Naive thymus-derived CD8-positive, alpha-beta T cell (primary cell): ENCODE measurements at regions of chr6 and their contacts with region 1.

Region 1: GRCh38 chr6:160013987-160014868 is 45.3 kb downstream of the IGF2R start:
- DNase-seq: peak in 3 of 10 donors; percentile 26 to 43 (median 28)
- ATAC-seq: peak; percentile 68 to 69
- H3K4me3 Mint-ChIP-seq: peak overlapping the region; percentile 50 to 83 (median 74)
- H3K27ac Mint-ChIP-seq: peak overlapping the region; percentile 80 to 95 (median 86)
- H3K4me1 Mint-ChIP-seq: peaks cover 22 to 61% (median 55%) of the 10 kb centered on the region in 4 donors
- H3K27me3 Mint-ChIP-seq: no peaks in the 10 kb centered on the region

Region 2: GRCh38 chr6:159968440-159969203 is 45.6 kb before region 1 on chr6 and contains the start of gene IGF2R:
- POLR2A ChIA-PET with region 1: interaction called, 20 read pairs
- DNase-seq: peak; percentile 81 to 96 (median 92)
- ATAC-seq: peak; percentile 85 to 91
- H3K4me3 Mint-ChIP-seq: peak within 1 kb of the TSS; percentile 83 to 97 (median 90)
- H3K27ac Mint-ChIP-seq: peak within 1 kb of the TSS; percentile 83 to 96 (median 92)
- H3K4me1 Mint-ChIP-seq: peaks cover 23 to 48% (median 41%) of the 10 kb centered on the region in 4 donors
- H3K27me3 Mint-ChIP-seq: no peaks in the 10 kb centered on the region
- polyA plus RNA-seq, gene IGF2R: 9.1 to 19.3 (median 13.6) TPM

Region 3: GRCh38 chr6:159979136-159979874 is 34.9 kb before region 1 on chr6:
- POLR2A ChIA-PET with region 1: interaction called, 12 read pairs
- DNase-seq: peak in 1 of 10 donors; percentile 53
- ATAC-seq: peak; percentile 21 to 60
- H3K4me3 Mint-ChIP-seq: peak overlapping the region in 9 of 10 donors; percentile 16 to 83 (median 59)
- H3K27ac Mint-ChIP-seq: peak overlapping the region; percentile 52 to 95 (median 90)
- H3K4me1 Mint-ChIP-seq: peaks cover 64 to 95% (median 94%) of the 10 kb centered on the region in 4 donors
- H3K27me3 Mint-ChIP-seq: no peaks in the 10 kb centered on the region

Region 4: DNA sequence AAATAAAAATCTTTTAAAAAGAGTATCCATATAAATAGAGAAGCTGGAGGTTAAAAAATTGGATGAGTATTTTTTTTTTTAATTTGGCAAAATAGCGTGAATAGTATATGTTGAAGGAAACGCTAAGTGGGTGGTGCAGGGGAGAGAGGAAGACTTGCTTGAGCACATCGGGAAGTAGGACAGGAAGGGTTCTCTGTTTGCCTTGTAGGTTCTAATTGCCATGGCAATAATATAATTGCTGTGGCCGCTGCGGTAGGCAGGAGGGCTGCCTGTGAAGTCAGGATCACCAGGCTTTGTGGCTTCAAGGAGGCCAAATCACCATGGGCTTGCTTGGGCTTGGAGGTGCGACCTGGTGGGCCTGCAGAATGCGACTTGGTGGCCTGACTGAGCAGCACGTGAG is 10.2 kb before region 1 on chr6:
- POLR2A ChIA-PET with region 1: no interaction called
- DNase-seq: no peak
- ATAC-seq: no peak
- H3K4me3 Mint-ChIP-seq: peak overlapping the region in 5 of 10 donors; percentile 13 to 58 (median 30)
- H3K27ac Mint-ChIP-seq: peak overlapping the region in 4 of 10 donors; percentile 39 to 75 (median 54)
- H3K4me1 Mint-ChIP-seq: peaks cover 30 to 70% (median 61%) of the 10 kb centered on the region in 4 donors
- H3K27me3 Mint-ChIP-seq: no peaks in the 10 kb centered on the region